Activated B cell treated with CpG ODN at 0.5 μM for 24 hours (primary cell): ENCODE measurements at regions of chr10 and their contacts with region 1.

Region 1: GRCh38 chr10:93376372-93377293 is 105.5 kb downstream of the MYOF start:
- DNase-seq: no peak
- ATAC-seq: peak; percentile 82
- H3K4me3 Mint-ChIP-seq: no peak overlapping the region
- H3K27ac Mint-ChIP-seq: no peak overlapping the region
- H3K4me1 Mint-ChIP-seq: peaks cover 2% of the 10 kb centered on the region
- H3K27me3 Mint-ChIP-seq: peaks cover 3% of the 10 kb centered on the region
- CTCF ChIP-seq: peak; percentile 81

Region 2: DNA sequence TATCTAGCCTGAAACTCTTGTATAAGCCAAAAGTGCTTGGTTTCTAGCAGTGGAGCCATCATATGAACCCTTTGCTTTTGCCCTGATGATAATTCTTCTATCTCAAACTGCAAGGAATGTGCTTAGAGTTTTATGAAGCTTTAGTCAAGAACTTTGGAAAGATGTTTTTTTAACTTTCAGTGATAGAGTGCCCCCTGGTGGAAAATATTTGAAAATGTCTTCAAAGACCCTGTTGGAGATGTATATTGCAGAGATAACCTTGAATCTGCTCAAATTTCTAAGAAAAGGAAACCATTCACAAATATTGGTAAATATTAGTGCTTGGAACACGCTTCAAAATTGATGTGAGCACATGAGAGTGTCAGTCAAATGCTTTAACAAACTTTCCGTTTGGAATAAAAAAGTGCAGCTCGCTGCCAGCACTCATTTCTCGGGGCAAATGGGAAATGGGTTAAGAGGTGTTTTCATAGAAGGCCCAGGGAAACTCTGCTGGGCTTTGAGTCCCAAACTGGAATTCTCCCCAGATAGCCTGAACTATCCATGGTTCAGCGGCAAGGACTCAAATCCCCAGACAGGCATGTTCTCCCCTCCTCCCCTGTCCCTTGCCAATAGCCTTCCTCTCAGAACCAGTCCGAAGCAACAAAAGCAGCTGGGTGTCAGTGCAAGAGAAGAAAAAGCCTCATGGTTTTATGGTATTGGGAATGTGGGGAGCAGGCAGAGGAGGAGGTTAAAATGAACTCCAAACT is 23.8 kb before region 1 on chr10:
- CTCF ChIA-PET with region 1: interaction called, 10 read pairs
- POLR2A ChIA-PET with region 1: no interaction called
- intact Hi-C with region 1: no loop called
- DNase-seq: no peak
- ATAC-seq: no peak
- H3K4me3 Mint-ChIP-seq: no peak overlapping the region
- H3K27ac Mint-ChIP-seq: no peak overlapping the region
- H3K4me1 Mint-ChIP-seq: no peaks in the 10 kb centered on the region
- H3K27me3 Mint-ChIP-seq: peaks cover 12% of the 10 kb centered on the region
- CTCF ChIP-seq: peak; percentile 52

Region 3: DNA sequence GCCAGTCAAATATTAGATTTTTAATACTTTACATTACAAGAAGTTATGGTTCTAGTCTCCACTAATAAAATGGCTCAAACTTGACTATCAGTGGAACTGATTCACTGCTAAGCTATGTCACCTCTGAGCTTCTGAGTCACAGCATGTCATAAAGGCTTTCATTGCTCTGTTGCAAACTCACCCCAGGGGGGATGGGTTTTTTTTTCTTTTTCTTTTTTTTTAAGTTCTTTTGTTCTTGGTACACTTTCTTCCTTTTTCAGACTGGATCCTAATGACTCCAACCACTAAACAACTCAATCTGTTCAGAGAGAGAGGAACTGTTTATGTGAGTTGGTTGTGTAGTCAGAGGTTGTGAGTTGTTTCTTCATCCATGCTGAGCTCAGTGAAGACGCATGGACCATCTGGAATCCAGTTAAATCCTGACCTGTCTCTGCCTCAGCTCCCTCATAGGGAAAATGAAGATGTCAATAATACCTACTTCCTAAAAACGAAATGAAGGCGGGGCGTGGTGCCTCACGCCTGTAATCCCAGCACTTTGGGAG is 94.5 kb after region 1 on chr10:
- CTCF ChIA-PET with region 1: interaction called, 13 read pairs
- POLR2A ChIA-PET with region 1: no interaction called
- intact Hi-C with region 1: no loop called
- DNase-seq: no peak
- ATAC-seq: no peak
- H3K4me3 Mint-ChIP-seq: no peak overlapping the region
- H3K27ac Mint-ChIP-seq: no peak overlapping the region
- H3K4me1 Mint-ChIP-seq: no peaks in the 10 kb centered on the region
- H3K27me3 Mint-ChIP-seq: no peaks in the 10 kb centered on the region
- CTCF ChIP-seq: no peak

Region 4: GRCh38 chr10:93496322-93497041 is 119.8 kb after region 1 on chr10 and contains the start of gene CEP55:
- CTCF ChIA-PET with region 1: interaction called, 11 read pairs
- POLR2A ChIA-PET with region 1: interaction called, 4 read pairs
- intact Hi-C with region 1: no loop called
- DNase-seq: peak; percentile 94
- ATAC-seq: peak; percentile 100
- H3K4me3 Mint-ChIP-seq: peak within 1 kb of the TSS; percentile 92
- H3K27ac Mint-ChIP-seq: peak within 1 kb of the TSS; percentile 74
- H3K4me1 Mint-ChIP-seq: peaks cover 16% of the 10 kb centered on the region
- H3K27me3 Mint-ChIP-seq: no peaks in the 10 kb centered on the region
- CTCF ChIP-seq: no peak
- total RNA-seq, gene CEP55: 0.95 and 1.6 TPM in 2 replicates

Region 5: GRCh38 chr10:93680412-93681047 is 303.9 kb after region 1 on chr10:
- CTCF ChIA-PET with region 1: interaction called, 5 read pairs
- POLR2A ChIA-PET with region 1: no interaction called
- intact Hi-C with region 1: loop called (anchors 1 kb)
- DNase-seq: no peak
- ATAC-seq: no peak
- H3K4me3 Mint-ChIP-seq: no peak overlapping the region
- H3K27ac Mint-ChIP-seq: no peak overlapping the region
- H3K4me1 Mint-ChIP-seq: no peaks in the 10 kb centered on the region
- H3K27me3 Mint-ChIP-seq: no peaks in the 10 kb centered on the region
- CTCF ChIP-seq: no peak

Region 6: GRCh38 chr10:93859049-93859655 is 482.5 kb after region 1 on chr10:
- CTCF ChIA-PET with region 1: interaction called, 7 read pairs
- POLR2A ChIA-PET with region 1: no interaction called
- intact Hi-C with region 1: loop called (anchors 1 kb)
- DNase-seq: no peak
- ATAC-seq: no peak
- H3K4me3 Mint-ChIP-seq: no peak overlapping the region
- H3K27ac Mint-ChIP-seq: no peak overlapping the region
- H3K4me1 Mint-ChIP-seq: no peaks in the 10 kb centered on the region
- H3K27me3 Mint-ChIP-seq: peaks cover 5% of the 10 kb centered on the region
- CTCF ChIP-seq: no peak